Tibial artery (tissue), 4 donors: ENCODE measurements at regions of chr11 and their contacts with region 1.

Region 1: DNA sequence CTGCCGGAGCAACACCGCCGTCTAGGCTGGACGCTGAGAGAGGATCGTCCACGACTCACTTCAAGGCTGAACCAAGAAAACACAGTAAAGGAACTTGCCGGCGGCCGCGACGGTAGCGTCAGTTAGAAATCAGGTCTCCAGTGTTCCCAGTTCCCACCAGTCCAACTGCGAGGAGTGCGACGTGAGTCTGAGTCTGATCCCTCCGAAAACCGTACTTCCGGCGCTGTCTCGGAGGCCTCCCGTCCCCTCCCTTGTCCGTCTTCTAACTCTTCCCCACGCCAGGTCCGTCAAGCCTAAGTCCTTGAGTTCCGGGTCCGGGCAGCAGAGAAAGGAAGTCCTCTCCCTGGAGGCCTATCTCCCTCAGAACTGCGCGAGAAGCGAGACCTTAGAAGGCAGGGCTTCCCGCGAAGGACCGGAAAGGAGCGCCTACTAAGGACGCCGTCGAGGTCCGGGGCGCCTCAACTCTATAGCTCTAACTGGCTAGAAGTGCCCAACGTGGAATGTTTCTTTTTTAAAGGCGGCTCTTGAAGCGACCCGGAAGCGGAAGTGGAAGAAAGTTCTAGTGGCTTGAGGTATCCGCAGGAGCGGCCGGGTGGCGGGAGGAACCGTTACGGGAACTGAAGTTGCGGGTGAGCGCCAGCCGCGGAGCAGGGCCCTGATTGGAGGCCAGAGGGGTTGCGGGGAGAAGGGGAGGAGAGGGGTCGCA is at the starts of genes BANF1 and EIF1AD:
- DNase-seq: peak; percentile 92 to 96
- H3K4me3 ChIP-seq: peak within 1 kb of the TSS; percentile 83 to 84
- H3K27ac ChIP-seq: peak within 1 kb of the TSS; percentile 87 to 93
- H3K4me1 ChIP-seq: peaks cover 0 to 33% (median 21%) of the 10 kb centered on the region in 4 donors
- H3K27me3 ChIP-seq: no peaks in the 10 kb centered on the region
- CTCF ChIP-seq: no peak

Region 2: DNA sequence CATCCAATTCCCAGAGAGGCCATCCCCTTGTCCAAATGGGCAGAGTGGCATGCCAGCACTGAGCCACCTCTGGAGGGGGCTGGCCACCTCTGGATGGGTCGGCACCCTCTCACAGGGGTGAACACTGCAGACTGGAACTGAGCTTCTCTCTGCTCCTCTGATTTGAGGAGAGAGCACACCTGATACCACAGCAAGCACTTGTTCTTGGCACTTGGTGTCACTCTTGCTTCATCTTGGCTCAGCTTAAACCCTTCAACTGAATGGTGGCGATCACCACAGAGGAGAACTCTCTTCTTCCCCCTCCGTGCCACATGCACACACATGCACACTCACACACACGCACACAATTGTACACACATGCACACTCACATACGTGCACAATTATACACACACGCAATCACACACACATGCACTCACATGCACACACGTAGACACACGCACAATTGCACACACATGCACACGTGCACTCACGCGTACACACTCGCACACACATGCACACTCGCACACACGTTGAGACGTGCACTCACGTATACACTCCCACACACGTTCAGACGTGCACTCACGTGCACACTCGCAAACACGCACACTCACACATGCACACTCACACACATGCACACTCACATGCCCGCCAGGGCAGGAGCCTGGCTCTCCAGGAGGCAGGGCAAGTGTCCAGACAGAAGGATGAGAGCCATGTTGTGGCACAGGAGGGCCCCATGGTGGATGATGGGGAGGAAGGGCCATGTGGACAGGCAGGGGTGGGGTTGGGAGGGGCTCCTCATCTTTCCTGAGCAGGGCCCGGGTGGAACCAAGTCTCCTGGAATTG is 191.8 kb before region 1 on chr11:
- intact Hi-C with region 1: no loop called
- DNase-seq: no peak
- H3K4me3 ChIP-seq: no peak overlapping the region
- H3K27ac ChIP-seq: no peak overlapping the region
- H3K4me1 ChIP-seq: no peaks in the 10 kb centered on the region
- H3K27me3 ChIP-seq: peaks cover 0 to 37% of the 10 kb centered on the region in 2 donors
- CTCF ChIP-seq: no peak

Region 3: GRCh38 chr11:65961232-65961901 is 40.7 kb before region 1 on chr11 and contains the start of gene SART1:
- intact Hi-C with region 1: loop called (anchors 5 kb)
- DNase-seq: peak; percentile 98 to 99
- H3K4me3 ChIP-seq: peak within 1 kb of the TSS; percentile 97 to 98
- H3K27ac ChIP-seq: peak within 1 kb of the TSS; percentile 88 to 95
- H3K4me1 ChIP-seq: peaks cover 6 to 33% (median 28%) of the 10 kb centered on the region in 4 donors
- H3K27me3 ChIP-seq: peaks cover 0 to 15% of the 10 kb centered on the region in 2 donors
- CTCF ChIP-seq: no peak

Region 4: DNA sequence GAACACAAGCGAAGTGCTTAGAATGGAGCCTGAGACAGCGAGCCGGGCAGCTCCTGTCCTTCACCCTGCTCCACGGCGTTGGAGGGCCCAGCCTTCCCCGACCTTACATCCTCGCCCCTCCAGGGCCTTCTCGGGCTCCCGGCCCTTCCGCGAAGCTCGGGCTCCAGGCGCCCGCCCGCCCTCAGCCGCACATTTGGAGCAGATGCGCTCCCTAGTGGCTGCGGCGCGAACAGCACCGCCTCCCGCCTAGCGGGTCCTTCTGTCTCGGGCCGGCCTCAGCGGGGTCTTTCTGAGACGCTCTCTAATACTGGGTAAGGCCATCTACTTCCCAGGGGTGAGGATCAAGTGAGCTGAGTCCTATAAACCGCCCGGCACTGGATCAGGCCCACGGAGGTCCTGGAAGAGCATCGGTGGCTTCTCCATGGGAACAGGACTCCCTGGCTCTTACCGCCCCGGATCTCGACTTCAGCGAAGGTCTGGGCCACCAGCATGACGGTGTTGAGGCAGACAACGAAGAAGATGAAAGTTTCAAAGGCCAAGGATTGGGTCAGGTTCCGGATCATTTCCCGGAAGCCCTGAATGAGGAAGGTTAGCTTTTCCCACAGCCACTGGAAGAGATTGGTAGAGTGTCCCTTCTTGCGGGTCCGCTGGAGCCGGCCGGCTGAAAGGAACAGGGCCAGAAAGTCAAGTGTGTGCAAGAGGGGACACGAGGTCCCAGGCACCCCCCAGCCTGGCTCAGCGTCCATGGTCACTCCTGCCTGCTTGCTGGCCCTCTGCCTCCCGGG is 20.5 kb after region 1 on chr11:
- intact Hi-C with region 1: loop called (anchors 1 kb)
- DNase-seq: peak; percentile 62 to 85
- H3K4me3 ChIP-seq: peak overlapping the region; percentile 12 to 30
- H3K27ac ChIP-seq: peak overlapping the region in 1 of 2 donors; percentile 34
- H3K4me1 ChIP-seq: peaks cover 0 to 27% (median 23%) of the 10 kb centered on the region in 4 donors
- H3K27me3 ChIP-seq: no peaks in the 10 kb centered on the region
- CTCF ChIP-seq: peak; percentile 97 to 99

Region 5: GRCh38 chr11:66069715-66070603 is 67.9 kb after region 1 on chr11 and contains the start of gene PACS1:
- intact Hi-C with region 1: no loop called
- DNase-seq: peak; percentile 65 to 90
- H3K4me3 ChIP-seq: peak within 1 kb of the TSS; percentile 60 to 90
- H3K27ac ChIP-seq: peak within 1 kb of the TSS; percentile 94 to 97
- H3K4me1 ChIP-seq: peaks cover 5 to 31% (median 25%) of the 10 kb centered on the region in 4 donors
- H3K27me3 ChIP-seq: no peaks in the 10 kb centered on the region
- CTCF ChIP-seq: peak in 1 of 2 experiments; percentile 57